ENCODE measurements at regions of chr6 and their contacts with region 1.

Region 1: GRCh38 chr6:15682965-15683822 is 20.4 kb upstream of the DTNBP1 start:
- DNase-seq: no peak
- H3K4me3 ChIP-seq: no peak overlapping the region
- H3K27ac ChIP-seq: no peak overlapping the region
- H3K4me1 ChIP-seq: no peaks in the 10 kb centered on the region
- H3K27me3 ChIP-seq: no peaks in the 10 kb centered on the region
- CTCF ChIP-seq: no peak
- POLR2A ChIP-seq: no peak

Region 2: DNA sequence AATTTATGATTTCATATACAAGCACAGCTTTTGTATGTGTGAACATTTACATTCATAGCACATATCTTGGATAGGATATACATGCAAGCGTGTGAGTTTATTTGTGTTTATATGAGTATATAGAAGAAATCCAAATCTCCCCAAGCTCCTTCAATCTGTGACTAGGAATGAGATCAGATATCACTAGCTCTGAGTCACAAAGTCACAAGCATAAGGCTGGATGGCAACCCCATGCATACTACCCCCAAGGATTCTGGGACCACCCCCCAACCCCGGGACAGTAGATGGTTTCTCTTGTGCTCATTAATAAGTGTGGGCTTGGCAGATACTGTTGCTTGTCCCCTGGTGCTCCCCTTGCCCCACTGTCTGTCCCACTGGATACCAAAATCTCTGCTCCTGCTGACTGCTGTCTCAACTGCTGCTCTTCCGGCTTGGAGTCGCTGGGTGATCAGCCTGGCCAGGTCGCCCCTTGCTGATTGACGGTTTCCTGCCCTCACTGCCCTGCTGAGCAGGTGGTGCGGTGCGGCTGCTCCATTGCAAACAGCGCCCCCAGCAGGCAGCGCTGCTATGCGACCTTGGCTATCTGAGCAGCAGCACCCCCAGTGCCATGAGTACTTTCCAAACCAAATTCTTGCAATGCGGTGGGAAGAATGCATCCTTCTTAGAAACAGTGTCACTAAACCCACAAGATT is 1286.2 kb before region 1 on chr6:
- intact Hi-C with region 1: loop called (anchors 5 kb)
- DNase-seq: no peak
- H3K4me3 ChIP-seq: no peak overlapping the region
- H3K27ac ChIP-seq: no peak overlapping the region
- H3K4me1 ChIP-seq: no peaks in the 10 kb centered on the region
- H3K27me3 ChIP-seq: no peaks in the 10 kb centered on the region
- CTCF ChIP-seq: no peak
- POLR2A ChIP-seq: no peak